ENCODE measurements at regions of chr17 and their contacts with region 1.

Region 1: GRCh38 chr17:16380640-16381495 is at the start of gene UBB:
- DNase-seq: peak; percentile 90 to 96 (median 92)
- ATAC-seq: peak; percentile 95
- H3K4me3 ChIP-seq: peak within 1 kb of the TSS; percentile 55
- H3K27ac ChIP-seq: peak within 1 kb of the TSS; percentile 94
- H3K4me1 ChIP-seq: peaks cover 17 to 23% of the 10 kb centered on the region in 2 experiments; a peak in 4 of 5 replicates
- H3K27me3 ChIP-seq: no peaks in the 10 kb centered on the region
- CTCF ChIP-seq: no peak; a peak in 3 of 6 replicates
- EP300 ChIP-seq: peak; percentile 64
- POLR2A ChIP-seq: peak; percentile 99
- RAD21 ChIP-seq: no peak
- polyA plus RNA-seq, gene UBB: 3,942 to 4,143 TPM

Region 2: DNA sequence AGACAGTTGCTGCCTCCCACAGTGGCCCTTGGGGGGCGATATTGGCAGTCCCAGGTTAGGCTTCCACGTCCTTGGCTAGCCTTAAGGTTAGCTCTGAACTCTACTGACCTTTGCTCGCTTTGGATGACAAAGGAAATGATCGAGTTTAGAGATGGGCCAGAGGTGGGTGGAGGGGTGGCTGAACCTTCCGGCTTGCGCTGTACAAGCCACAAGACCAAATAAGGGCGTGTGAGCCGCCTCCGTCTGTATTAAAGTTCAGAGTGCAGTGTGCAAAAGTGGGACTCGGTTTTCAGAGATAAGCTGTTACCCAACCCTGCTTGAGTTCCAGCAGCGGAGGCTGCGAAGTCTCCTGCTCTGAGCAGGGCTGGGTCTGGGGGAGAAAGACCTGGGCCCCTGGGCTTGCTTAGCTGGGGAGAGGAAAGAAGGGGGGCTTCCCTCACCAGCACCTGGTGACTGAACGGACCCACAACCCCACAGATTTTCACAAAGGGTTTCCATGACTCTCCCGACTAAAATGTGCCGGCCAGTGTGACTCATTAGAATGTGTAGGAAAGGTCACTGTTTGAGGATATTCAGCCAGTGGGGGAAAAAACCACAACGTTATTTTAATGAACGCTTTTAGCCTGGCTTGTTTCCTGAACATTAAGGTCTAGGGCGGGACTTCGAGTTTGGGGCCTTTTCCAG is 94.8 kb before region 1 on chr17:
- CTCF ChIA-PET with region 1: no interaction called
- POLR2A ChIA-PET with region 1: interaction called, 10 read pairs
- in situ Hi-C with region 1: no loop called
- intact Hi-C with region 1: loop called (anchors 2 kb)
- DNase-seq: peak; percentile 85 to 95 (median 88)
- ATAC-seq: peak; percentile 96
- H3K4me3 ChIP-seq: peak overlapping the region; percentile 13; the same call in 1 of the 2 replicates
- H3K27ac ChIP-seq: peak overlapping the region; percentile 98
- H3K4me1 ChIP-seq: peaks cover 9 to 47% of the 10 kb centered on the region in 2 experiments
- H3K27me3 ChIP-seq: no peaks in the 10 kb centered on the region
- CTCF ChIP-seq: peak; percentile 78 to 80 (median 79)
- EP300 ChIP-seq: peak; percentile 73
- POLR2A ChIP-seq: peak; percentile 87
- RAD21 ChIP-seq: peak; percentile 51 to 74

Region 3: GRCh38 chr17:16363749-16364536 is 16.9 kb before region 1 on chr17:
- CTCF ChIA-PET with region 1: no interaction called
- POLR2A ChIA-PET with region 1: interaction called, 12 read pairs
- in situ Hi-C with region 1: no loop called
- intact Hi-C with region 1: no loop called
- DNase-seq: peak; percentile 63 to 78 (median 67)
- ATAC-seq: peak; percentile 98
- H3K4me3 ChIP-seq: no peak overlapping the region
- H3K27ac ChIP-seq: no peak overlapping the region
- H3K4me1 ChIP-seq: no peaks in the 10 kb centered on the region; a peak in 1 of 5 replicates
- H3K27me3 ChIP-seq: no peaks in the 10 kb centered on the region
- CTCF ChIP-seq: peak; percentile 77 to 88 (median 82)
- EP300 ChIP-seq: no peak
- POLR2A ChIP-seq: no peak
- RAD21 ChIP-seq: peak; percentile 62 to 80

Region 4: DNA sequence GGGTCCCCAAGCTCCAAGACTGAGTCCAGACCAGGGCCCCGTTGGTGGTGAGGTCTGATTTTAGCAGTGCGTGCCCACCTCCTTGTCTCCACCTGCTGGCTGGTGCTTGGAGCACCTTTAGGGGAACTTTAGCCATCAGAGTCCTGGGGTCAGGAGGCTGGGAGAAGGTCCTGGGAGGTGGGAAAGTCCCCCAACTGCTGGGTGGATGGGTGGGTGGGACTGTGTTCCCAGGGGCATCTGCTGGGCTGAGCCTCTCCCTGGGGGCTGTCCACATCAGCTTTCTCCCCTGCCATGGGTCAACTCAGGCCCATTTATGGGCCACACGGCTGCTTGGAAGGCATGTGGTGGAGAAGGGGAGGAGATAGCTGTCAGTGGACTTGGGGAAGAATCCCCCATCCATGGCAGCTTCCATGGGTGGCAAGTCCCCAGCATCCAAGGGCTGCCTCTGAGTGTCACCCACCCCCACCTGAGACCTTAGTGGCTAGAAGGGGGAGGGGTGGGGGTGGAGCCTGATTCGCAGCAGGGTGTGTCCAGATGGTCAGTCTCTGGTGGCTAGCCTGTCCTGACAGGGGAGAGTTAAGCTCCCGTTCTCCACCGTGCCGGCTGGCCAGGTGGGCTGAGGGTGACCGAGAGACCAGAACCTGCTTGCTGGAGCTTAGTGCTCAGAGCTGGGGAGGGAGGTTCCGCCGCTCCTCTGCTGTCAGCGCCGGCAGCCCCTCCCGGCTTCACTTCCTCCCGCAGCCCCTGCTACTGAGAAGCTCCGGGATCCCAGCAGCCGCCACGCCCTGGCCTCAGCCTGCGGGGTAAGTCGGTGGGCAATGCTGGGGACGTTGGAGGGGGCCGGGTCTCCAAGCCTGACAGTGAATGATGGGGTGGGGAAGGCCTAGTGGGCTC is 34.4 kb after region 1 on chr17 and contains the start of gene TRPV2:
- CTCF ChIA-PET with region 1: interaction called, 3 read pairs
- POLR2A ChIA-PET with region 1: interaction called, 6 read pairs
- in situ Hi-C with region 1: no loop called
- intact Hi-C with region 1: loop called (anchors 1 kb)
- DNase-seq: peak; percentile 69 to 76 (median 73)
- ATAC-seq: peak; percentile 83
- H3K4me3 ChIP-seq: peak within 1 kb of the TSS; percentile 80
- H3K27ac ChIP-seq: peak within 1 kb of the TSS; percentile 88
- H3K4me1 ChIP-seq: peaks cover 37 to 39% of the 10 kb centered on the region in 2 experiments
- H3K27me3 ChIP-seq: no peaks in the 10 kb centered on the region
- CTCF ChIP-seq: peak; percentile 78 to 88 (median 83)
- EP300 ChIP-seq: no peak
- POLR2A ChIP-seq: peak; percentile 82
- RAD21 ChIP-seq: peak; percentile 61 to 70; a peak in 3 of 4 replicates
- polyA plus RNA-seq, gene TRPV2: 10.0 to 15.6 TPM

Measured in K562 (cell line).